GM10248 (cell line): ENCODE measurements at regions of chr1 and their contacts with region 1.

Region 1: DNA sequence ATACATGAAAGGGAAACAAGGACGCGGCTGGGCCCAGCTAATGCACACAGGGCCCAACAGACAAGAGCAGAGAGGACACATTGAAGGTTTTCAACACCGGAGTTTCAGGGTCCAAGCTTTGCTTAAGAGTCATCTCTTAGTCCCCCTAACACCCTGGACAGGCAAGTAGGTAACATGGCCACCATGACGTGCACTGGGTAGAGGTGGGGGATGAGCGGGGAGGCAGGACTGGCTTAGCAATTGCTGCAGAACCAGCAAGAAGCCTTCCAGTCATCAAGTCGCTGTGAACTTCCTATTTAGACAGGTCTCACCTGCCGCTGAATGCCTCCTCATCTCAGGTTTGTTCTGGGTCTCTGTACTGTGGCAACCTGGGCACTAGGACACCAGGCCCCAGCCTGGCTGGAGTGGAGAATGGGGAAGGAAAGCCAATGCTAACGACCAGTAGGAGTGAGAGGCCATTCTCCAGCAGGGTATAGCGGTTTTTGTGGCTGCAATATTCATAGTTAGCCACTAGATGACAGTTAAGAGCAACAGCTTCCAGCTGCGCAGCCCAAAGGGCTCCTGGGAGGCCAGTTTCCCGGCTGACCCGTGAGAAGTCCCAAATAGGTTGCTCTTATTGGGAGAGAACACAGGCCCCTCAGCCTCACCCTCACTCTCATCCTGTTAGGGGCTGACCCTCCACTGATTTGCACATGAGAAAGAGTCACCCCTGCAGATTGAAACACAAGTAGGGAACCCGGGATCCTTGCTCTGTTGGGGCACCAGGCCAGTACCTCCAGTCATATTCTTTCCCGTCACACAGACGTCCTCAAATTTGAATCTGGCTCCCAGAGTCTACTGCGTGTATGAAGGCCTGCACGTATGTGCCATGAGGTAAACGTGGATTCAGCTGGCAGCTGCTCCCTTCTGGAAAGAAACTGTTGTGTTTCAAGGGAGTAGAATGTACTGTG is 6.0 kb upstream of the PIGC start:
- DNase-seq: peak; percentile 74
- CTCF ChIP-seq: peak; percentile 86

Region 2: GRCh38 chr1:172144445-172145061 is 305.3 kb before region 1 on chr1:
- CTCF ChIA-PET with region 1: no interaction called
- POLR2A ChIA-PET with region 1: no interaction called
- DNase-seq: no peak
- CTCF ChIP-seq: no peak

Region 3: DNA sequence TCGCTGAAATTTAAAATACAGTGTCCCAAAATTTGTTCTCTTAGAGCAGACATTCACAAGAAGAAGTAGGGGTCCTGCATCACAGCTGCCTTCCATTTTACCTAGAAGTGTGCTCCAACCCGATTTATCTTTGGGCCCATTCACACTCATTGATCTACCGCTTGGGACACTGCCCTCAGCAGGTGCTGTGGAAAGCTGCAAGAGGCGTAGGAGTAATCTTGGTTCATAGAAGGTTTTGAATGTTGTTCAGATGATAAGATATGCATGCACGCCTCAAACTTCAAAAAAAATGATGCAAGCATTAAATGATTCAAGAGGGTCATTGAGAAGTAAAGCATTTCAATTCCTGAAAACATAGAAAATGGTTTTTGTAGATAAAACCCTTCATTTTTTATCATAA is 48.0 kb before region 1 on chr1:
- CTCF ChIA-PET with region 1: no interaction called
- POLR2A ChIA-PET with region 1: no interaction called
- DNase-seq: no peak
- CTCF ChIP-seq: no peak

Region 4: DNA sequence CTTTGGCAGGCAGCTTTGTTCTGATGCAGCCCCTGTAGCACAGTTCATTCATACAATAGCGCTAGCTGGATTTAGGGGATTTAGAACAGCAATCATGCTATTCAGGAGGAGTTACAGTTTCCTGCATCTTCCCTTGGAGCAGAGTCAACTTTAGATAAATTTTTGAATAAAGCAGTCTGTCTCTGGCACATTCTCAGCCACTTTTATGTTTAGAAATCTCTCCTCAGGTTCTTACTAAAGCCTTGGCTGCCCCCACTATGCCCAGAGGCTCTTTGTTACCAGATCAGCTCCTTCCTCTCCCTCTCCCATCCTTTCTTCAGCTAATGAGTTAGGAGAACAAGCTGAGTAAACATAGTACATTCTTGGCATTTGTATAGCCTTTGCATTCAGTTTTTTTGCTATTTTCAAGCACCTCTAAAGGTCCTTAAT is 11.0 kb after region 1 on chr1:
- CTCF ChIA-PET with region 1: interaction called, 21 read pairs
- POLR2A ChIA-PET with region 1: no interaction called
- DNase-seq: no peak
- CTCF ChIP-seq: no peak

Region 5: GRCh38 chr1:172549621-172550280 is 99.9 kb after region 1 on chr1:
- CTCF ChIA-PET with region 1: no interaction called
- POLR2A ChIA-PET with region 1: no interaction called
- DNase-seq: no peak
- CTCF ChIP-seq: no peak